PC-3 (cell line): ENCODE measurements at regions of chr1 and their contacts with region 1.

Region 1: DNA sequence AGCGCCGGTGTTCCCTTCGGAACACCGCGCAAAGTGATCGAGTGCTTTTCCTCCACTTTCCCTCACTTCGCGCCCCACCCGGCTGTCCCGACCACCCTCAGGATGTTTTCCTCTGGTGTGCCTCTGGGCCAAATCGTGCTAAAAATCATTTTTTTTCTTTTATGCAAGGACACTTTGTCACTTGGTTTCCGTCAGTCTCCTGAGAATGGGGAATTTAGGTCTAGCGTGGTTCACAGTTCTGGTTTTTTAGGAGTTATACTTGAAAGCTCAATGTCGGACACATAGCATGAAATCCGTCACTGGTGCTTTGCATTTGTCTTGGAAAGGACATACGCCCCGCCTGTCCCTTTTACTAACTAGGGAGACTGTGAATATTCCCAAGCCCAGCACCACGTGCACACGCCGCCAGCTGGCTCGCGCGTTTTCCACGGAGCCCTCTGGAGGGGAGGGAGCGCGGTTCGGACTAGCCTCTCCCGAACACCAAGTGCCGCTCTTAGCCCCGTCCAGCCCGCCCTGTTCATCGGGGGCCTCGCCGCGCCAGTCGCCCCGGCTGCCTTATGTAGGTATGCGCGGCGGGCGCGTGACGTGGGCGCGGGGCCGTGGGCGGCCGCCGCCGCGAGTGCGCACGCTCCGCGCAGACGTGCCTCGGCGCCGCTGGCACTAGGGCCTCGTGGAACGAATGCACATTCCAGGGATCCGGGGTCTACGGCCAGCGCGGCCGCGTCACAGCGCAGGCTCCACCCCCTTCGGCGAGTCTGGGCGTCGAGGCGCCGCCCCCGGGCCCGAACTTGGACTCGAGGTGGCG is 572 bp upstream of the IRF2BP2 start:
- DNase-seq: peak; percentile 84
- ATAC-seq: peak; percentile 55
- H3K4me3 ChIP-seq: peak overlapping the region; percentile 68
- H3K27ac ChIP-seq: peak overlapping the region; percentile 97
- H3K4me1 ChIP-seq: peaks cover 33% of the 10 kb centered on the region
- H3K27me3 ChIP-seq: no peaks in the 10 kb centered on the region
- CTCF ChIP-seq: no peak

Region 2: GRCh38 chr1:234564642-234565037 is 45.9 kb before region 1 on chr1:
- CTCF ChIA-PET with region 1: no interaction called
- POLR2A ChIA-PET with region 1: no interaction called
- intact Hi-C with region 1: no loop called
- DNase-seq: peak; percentile 94
- ATAC-seq: peak; percentile 98
- H3K4me3 ChIP-seq: peak overlapping the region; percentile 40; the same call in 1 of the 2 replicates
- H3K27ac ChIP-seq: peak overlapping the region; percentile 59
- H3K4me1 ChIP-seq: peaks cover 22% of the 10 kb centered on the region
- H3K27me3 ChIP-seq: no peaks in the 10 kb centered on the region
- CTCF ChIP-seq: no peak

Region 3: GRCh38 chr1:234592242-234592641 is 18.3 kb before region 1 on chr1:
- CTCF ChIA-PET with region 1: no interaction called
- POLR2A ChIA-PET with region 1: no interaction called
- intact Hi-C with region 1: no loop called
- DNase-seq: no peak
- ATAC-seq: no peak
- H3K4me3 ChIP-seq: no peak overlapping the region
- H3K27ac ChIP-seq: no peak overlapping the region
- H3K4me1 ChIP-seq: no peaks in the 10 kb centered on the region
- H3K27me3 ChIP-seq: no peaks in the 10 kb centered on the region
- CTCF ChIP-seq: no peak

Region 4: GRCh38 chr1:234656856-234657654 is 46.5 kb after region 1 on chr1:
- CTCF ChIA-PET with region 1: no interaction called
- POLR2A ChIA-PET with region 1: interaction called, 23 read pairs
- intact Hi-C with region 1: loop called (anchors 1 kb)
- DNase-seq: peak; percentile 97
- ATAC-seq: peak; percentile 89
- H3K4me3 ChIP-seq: peak overlapping the region; percentile 45
- H3K27ac ChIP-seq: peak overlapping the region; percentile 95
- H3K4me1 ChIP-seq: peaks cover 54% of the 10 kb centered on the region
- H3K27me3 ChIP-seq: no peaks in the 10 kb centered on the region
- CTCF ChIP-seq: no peak

Region 5: DNA sequence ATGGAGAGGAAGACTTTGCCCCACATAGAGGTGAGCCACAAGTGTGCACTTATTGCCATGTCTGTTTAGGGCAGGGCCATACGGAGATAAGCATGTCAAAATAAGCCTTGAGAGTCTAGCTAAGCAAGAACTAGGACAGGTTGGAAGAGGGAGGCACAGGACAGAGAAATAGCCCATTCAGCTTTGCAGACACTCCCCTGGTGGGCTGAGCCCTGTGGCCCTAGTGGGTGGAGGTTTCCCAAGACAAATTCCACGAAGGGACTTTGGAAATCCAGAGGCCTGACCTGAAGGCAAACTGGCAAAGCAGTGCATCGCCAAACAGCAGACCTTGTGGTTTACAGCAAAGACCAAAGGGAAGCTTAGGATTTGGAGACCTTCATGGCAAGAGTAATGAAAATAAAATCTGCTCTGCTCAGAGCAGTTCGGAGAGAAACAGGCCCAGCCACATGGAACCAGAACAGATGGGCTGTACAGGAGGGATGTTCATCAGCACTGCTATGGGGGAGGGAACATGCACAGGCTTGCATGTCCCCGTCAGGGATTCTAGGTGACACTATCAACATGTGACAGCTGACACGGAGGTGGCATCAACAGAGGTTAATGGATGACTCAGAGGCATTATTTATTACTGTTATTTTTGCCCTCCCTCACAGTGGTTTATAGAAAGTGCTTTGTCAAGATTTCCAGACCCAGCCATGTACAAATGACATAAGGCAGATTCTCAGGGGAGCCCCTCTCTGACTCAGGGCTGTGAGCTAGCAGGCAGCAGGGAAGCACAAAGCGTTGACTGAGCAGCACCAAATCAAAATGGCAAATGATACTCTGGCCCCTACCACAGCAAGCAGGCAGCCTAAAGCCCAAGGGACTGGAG is 89.5 kb after region 1 on chr1:
- CTCF ChIA-PET with region 1: no interaction called
- POLR2A ChIA-PET with region 1: no interaction called
- intact Hi-C with region 1: loop called (anchors 10 kb)
- DNase-seq: no peak
- ATAC-seq: no peak
- H3K4me3 ChIP-seq: no peak overlapping the region
- H3K27ac ChIP-seq: no peak overlapping the region
- H3K4me1 ChIP-seq: peaks cover under 1% of the 10 kb centered on the region; the same call in 1 of the 2 replicates
- H3K27me3 ChIP-seq: no peaks in the 10 kb centered on the region
- CTCF ChIP-seq: no peak

Region 6: GRCh38 chr1:234925440-234926263 is 315.1 kb after region 1 on chr1:
- CTCF ChIA-PET with region 1: no interaction called
- POLR2A ChIA-PET with region 1: interaction called, 10 read pairs
- intact Hi-C with region 1: loop called (anchors 1 kb)
- DNase-seq: peak; percentile 96
- ATAC-seq: peak; percentile 97
- H3K4me3 ChIP-seq: no peak overlapping the region
- H3K27ac ChIP-seq: peak overlapping the region; percentile 92
- H3K4me1 ChIP-seq: peaks cover 26% of the 10 kb centered on the region
- H3K27me3 ChIP-seq: no peaks in the 10 kb centered on the region
- CTCF ChIP-seq: no peak

Region 7: DNA sequence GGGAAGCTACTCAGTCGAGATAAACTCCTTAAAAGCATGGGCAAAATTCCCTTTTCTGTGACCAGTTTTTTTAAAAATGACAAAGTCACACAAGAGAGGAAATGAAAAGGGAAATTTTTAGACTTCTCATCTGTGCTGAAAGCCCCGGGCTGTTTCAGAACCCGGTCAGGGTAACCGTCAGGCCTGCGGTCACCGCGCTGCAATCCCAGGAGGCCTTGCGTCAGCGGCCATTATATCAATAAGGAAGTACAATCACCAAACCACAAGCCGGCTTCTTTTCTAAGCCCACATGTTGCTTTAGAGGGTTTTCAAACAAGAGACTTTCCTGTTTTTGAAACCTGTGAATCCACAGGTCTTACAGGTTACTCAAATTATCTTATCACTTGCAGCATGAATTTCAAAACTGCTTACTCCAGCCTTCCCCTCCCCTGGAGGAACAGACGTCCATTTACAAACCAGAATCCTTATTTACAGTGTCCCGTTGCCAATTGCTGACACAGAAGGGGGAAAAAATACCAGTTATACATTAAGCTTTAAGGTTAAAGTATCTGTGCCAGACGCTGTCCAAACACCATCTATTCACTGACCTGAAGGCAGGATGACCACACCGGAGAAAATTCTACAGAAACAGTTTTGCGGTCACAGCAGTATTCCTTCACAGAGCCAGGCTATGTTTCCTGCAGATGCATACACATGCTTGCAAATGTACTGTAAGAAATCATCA is 352.8 kb after region 1 on chr1:
- CTCF ChIA-PET with region 1: no interaction called
- POLR2A ChIA-PET with region 1: interaction called, 3 read pairs
- intact Hi-C with region 1: loop called (anchors 2 kb)
- DNase-seq: peak; percentile 87
- ATAC-seq: peak; percentile 50
- H3K4me3 ChIP-seq: peak overlapping the region; percentile 41; the same call in 1 of the 2 replicates
- H3K27ac ChIP-seq: peak overlapping the region; percentile 100
- H3K4me1 ChIP-seq: peaks cover 67% of the 10 kb centered on the region
- H3K27me3 ChIP-seq: no peaks in the 10 kb centered on the region
- CTCF ChIP-seq: no peak

Region 8: GRCh38 chr1:234978397-234979295 is 368.1 kb after region 1 on chr1:
- CTCF ChIA-PET with region 1: no interaction called
- POLR2A ChIA-PET with region 1: interaction called, 5 read pairs
- intact Hi-C with region 1: loop called (anchors 5 kb)
- DNase-seq: peak; percentile 60
- ATAC-seq: peak; percentile 27
- H3K4me3 ChIP-seq: no peak overlapping the region
- H3K27ac ChIP-seq: peak overlapping the region; percentile 100
- H3K4me1 ChIP-seq: peaks cover 74% of the 10 kb centered on the region
- H3K27me3 ChIP-seq: no peaks in the 10 kb centered on the region
- CTCF ChIP-seq: no peak

Region 9: GRCh38 chr1:235075188-235075926 is 464.8 kb after region 1 on chr1:
- CTCF ChIA-PET with region 1: no interaction called
- POLR2A ChIA-PET with region 1: interaction called, 17 read pairs
- intact Hi-C with region 1: loop called (anchors 2 kb)
- DNase-seq: peak; percentile 91
- ATAC-seq: peak; percentile 47
- H3K4me3 ChIP-seq: peak overlapping the region; percentile 39
- H3K27ac ChIP-seq: peak overlapping the region; percentile 100
- H3K4me1 ChIP-seq: peaks cover 81% of the 10 kb centered on the region
- H3K27me3 ChIP-seq: no peaks in the 10 kb centered on the region
- CTCF ChIP-seq: no peak